Sigmoid colon (tissue), 7 donors: ENCODE measurements at regions of chr14 and their contacts with region 1.

Region 1: DNA sequence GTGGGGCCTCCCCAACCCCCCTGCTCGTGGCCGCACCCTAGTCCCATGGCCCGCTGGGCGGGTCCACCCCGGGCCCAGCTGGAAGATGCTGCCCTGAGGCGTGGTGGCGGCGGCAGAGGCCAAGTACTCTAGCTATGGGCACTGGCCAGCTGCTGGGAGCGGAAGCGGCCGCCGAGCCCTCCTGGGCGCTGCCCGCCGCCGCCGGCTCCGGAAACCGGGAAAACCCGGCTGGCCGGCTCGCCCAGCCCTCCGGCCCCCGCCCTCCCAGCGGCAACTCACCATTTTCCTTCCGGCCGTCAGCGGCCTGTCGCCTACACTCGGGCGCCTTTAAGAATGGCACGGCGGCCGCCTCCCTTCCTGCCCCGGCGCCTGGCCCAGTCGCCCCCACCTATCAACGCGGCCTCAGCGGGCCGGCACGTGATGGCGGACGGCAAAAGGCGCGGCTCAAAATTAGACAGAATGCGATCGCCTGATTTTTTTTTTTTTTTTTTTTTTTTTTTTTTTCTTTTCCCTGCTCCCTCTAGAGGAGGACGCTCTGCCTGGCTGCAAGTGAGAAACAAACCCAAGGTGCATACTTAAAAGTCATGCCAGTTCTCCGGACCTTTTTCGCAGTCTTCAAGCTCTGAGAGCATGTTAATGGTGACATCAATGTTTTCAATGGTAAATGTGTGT is at the start of gene GMFB:
- DNase-seq: peak; percentile 96
- H3K4me3 ChIP-seq: peak within 1 kb of the TSS; percentile 70 to 96 (median 82)
- H3K27ac ChIP-seq: peak within 1 kb of the TSS; percentile 92 to 96 (median 95)
- H3K4me1 ChIP-seq: peaks cover 0 to 44% (median 35%) of the 10 kb centered on the region in 4 donors
- H3K27me3 ChIP-seq: no peaks in the 10 kb centered on the region
- CTCF ChIP-seq: peak in 3 of 4 experiments; percentile 19 to 33 (median 32)
- EP300 ChIP-seq: peak in 1 of 4 donors; percentile 52
- POLR2A ChIP-seq: peak; percentile 62 to 63
- total RNA-seq, gene GMFB: 33.0 to 57.3 (median 41.8) TPM

Region 2: DNA sequence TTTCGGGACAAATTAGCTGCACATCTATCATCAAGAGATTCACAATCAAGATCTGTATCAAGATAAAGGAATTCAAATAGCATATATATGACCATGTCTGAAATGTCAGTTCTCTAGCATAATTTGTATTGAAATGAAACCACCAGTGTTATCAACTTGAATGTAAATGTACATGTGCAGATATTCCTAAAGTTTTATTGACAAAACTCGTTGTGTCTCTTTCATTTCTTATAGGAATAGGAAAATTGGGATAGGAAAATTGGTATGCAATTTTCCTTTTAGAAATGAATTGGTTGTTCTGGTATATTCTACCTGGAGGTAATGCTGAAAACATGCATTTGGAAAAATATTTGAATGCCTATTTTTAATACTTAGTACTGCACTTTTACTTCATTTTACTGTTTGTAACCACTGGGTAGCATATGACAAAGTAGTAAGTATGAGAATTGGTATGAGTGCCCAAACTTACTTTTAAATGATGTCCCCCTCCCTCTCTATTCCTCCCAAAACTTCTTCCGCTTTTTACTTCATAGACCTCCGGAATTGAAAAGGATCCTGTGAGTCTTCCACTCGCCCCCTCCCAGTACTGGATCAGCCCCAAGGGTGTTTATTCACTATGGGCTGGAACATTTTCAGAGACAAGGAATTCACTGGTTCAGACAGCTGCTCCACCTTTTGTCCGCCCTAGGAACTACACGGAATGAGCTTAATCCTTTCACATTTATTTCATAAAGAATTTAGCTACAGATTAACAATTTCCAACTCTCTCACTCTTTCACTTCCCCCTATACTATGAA is 68.6 kb before region 1 on chr14:
- intact Hi-C with region 1: no loop called
- DNase-seq: no peak
- H3K4me3 ChIP-seq: no peak overlapping the region
- H3K27ac ChIP-seq: no peak overlapping the region
- H3K4me1 ChIP-seq: peaks cover 0 to 4% (median 0%) of the 10 kb centered on the region in 4 donors
- H3K27me3 ChIP-seq: no peaks in the 10 kb centered on the region
- CTCF ChIP-seq: peak in 3 of 4 experiments; percentile 24 to 41 (median 35)
- EP300 ChIP-seq: no peak
- POLR2A ChIP-seq: no peak

Region 3: GRCh38 chr14:54440873-54441868 is 47.6 kb before region 1 on chr14 and contains the start of gene CNIH1:
- intact Hi-C with region 1: loop called (anchors 1 kb)
- DNase-seq: peak; percentile 95
- H3K4me3 ChIP-seq: peak within 1 kb of the TSS; percentile 49 to 84 (median 62)
- H3K27ac ChIP-seq: peak within 1 kb of the TSS; percentile 79 to 98 (median 94)
- H3K4me1 ChIP-seq: peaks cover 0 to 61% (median 31%) of the 10 kb centered on the region in 4 donors
- H3K27me3 ChIP-seq: no peaks in the 10 kb centered on the region
- CTCF ChIP-seq: peak; percentile 79 to 93 (median 86)
- EP300 ChIP-seq: no peak
- POLR2A ChIP-seq: no peak
- total RNA-seq, gene CNIH1: 147 to 261 (median 201) TPM

Region 4: GRCh38 chr14:54509546-54510501 is 21.0 kb after region 1 on chr14 and contains the start of gene CGRRF1:
- intact Hi-C with region 1: loop called (anchors 1 kb)
- DNase-seq: peak; percentile 99
- H3K4me3 ChIP-seq: peak within 1 kb of the TSS; percentile 70 to 95 (median 88)
- H3K27ac ChIP-seq: peak within 1 kb of the TSS; percentile 83 to 89 (median 88)
- H3K4me1 ChIP-seq: peaks cover 0 to 30% (median 19%) of the 10 kb centered on the region in 4 donors
- H3K27me3 ChIP-seq: no peaks in the 10 kb centered on the region
- CTCF ChIP-seq: peak; percentile 5 to 66 (median 56)
- EP300 ChIP-seq: peak in 1 of 4 donors; percentile 30
- POLR2A ChIP-seq: peak; percentile 67 to 71
- total RNA-seq, gene CGRRF1: 16.8 to 52.8 (median 34.1) TPM